ENCODE measurements at regions of chr9 and their contacts with region 1.

Region 1: GRCh38 chr9:89428901-89429890 is 68.7 kb downstream of the SEMA4D start:
- DNase-seq: peak; percentile 53 to 74
- H3K4me3 ChIP-seq: no peak overlapping the region
- H3K27ac ChIP-seq: peak overlapping the region; percentile 14; the same call in 1 of the 2 replicates
- H3K4me1 ChIP-seq: peaks cover 9 to 30% (median 19%) of the 10 kb centered on the region in 4 experiments
- H3K27me3 ChIP-seq: no peaks in the 10 kb centered on the region
- CTCF ChIP-seq: peak in 2 of 3 experiments; percentile 91; a peak in 3 of 4 replicates
- EP300 ChIP-seq: no peak
- POLR2A ChIP-seq: no peak
- RAD21 ChIP-seq: peak; percentile 80 to 90

Region 2: DNA sequence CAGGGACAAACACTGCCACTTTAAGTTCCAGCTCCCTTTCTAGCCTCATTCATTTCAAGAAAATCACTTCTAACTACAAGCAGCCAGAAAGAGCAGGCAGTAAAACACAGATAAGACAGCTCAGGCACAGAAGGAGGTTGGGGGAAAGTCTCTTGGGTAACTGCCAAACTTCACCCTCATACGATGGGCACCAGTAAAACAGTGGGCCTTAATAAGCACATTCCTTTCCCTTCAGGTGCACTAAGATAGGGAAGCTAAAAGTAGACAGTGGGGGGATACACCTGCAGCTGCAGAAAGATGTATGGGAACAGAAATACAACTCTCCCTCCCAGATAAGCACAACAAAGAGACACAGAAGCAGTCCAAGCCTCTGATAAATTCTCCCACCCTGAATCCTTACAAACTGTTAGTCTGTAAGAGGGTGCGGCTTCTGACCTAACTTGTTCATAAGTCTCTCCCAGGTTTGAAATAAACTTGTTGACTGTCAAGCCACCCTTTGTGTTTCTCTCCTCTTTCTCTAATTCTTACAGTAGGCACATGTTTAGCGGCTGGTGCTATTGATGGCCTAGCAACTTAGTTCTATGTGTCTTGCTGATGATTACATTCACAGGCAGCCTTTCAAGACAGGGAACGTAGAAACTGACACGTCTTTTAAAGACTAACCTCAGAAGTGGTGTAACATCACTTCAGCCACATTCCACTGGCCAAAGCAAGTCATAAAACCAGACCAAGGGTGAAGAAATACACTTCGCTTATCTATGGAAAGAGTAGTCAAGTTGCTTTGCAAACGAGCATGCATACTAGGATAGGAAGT is 125.0 kb before region 1 on chr9:
- CTCF ChIA-PET with region 1: no interaction called
- POLR2A ChIA-PET with region 1: no interaction called
- DNase-seq: no peak
- H3K4me3 ChIP-seq: no peak overlapping the region
- H3K27ac ChIP-seq: no peak overlapping the region
- H3K4me1 ChIP-seq: no peaks in the 10 kb centered on the region; a peak in 1 of 7 replicates
- H3K27me3 ChIP-seq: no peaks in the 10 kb centered on the region
- CTCF ChIP-seq: no peak
- EP300 ChIP-seq: no peak
- POLR2A ChIP-seq: no peak
- RAD21 ChIP-seq: no peak

Region 3: DNA sequence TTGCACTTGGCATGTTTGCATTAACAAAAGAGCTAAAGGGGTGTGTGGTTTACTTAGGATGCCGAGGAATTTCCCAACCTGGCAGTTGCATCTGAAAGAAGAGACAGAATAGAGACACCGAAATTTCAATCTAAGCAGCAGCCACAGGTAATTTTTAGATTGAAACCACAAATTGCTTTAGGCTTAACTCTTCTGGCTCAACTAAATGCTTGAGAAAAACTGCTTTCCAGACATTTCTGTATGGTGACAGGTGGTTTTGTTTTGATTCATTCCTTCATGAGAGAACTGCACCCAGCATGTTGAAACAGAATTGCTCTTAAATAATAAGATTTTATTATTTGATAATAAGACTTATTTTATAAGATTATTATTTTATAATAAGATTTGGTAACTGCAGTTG is 89.4 kb before region 1 on chr9:
- CTCF ChIA-PET with region 1: no interaction called
- POLR2A ChIA-PET with region 1: no interaction called
- DNase-seq: no peak
- H3K4me3 ChIP-seq: no peak overlapping the region
- H3K27ac ChIP-seq: no peak overlapping the region
- H3K4me1 ChIP-seq: no peaks in the 10 kb centered on the region
- H3K27me3 ChIP-seq: no peaks in the 10 kb centered on the region
- CTCF ChIP-seq: no peak
- EP300 ChIP-seq: no peak
- POLR2A ChIP-seq: no peak
- RAD21 ChIP-seq: no peak

Region 4: GRCh38 chr9:89364666-89365531 is 64.3 kb before region 1 on chr9:
- CTCF ChIA-PET with region 1: no interaction called
- POLR2A ChIA-PET with region 1: no interaction called
- DNase-seq: no peak
- H3K4me3 ChIP-seq: no peak overlapping the region
- H3K27ac ChIP-seq: no peak overlapping the region
- H3K4me1 ChIP-seq: no peaks in the 10 kb centered on the region
- H3K27me3 ChIP-seq: no peaks in the 10 kb centered on the region
- CTCF ChIP-seq: no peak
- EP300 ChIP-seq: no peak
- POLR2A ChIP-seq: no peak
- RAD21 ChIP-seq: no peak

Region 5: GRCh38 chr9:89442981-89443814 is 14.0 kb after region 1 on chr9:
- CTCF ChIA-PET with region 1: interaction called, 45 read pairs
- POLR2A ChIA-PET with region 1: interaction called, 5 read pairs
- DNase-seq: no peak
- H3K4me3 ChIP-seq: no peak overlapping the region
- H3K27ac ChIP-seq: no peak overlapping the region
- H3K4me1 ChIP-seq: peaks cover 0 to 36% (median 7%) of the 10 kb centered on the region in 4 experiments; a peak in 6 of 7 replicates
- H3K27me3 ChIP-seq: no peaks in the 10 kb centered on the region
- CTCF ChIP-seq: no peak
- EP300 ChIP-seq: no peak
- POLR2A ChIP-seq: no peak
- RAD21 ChIP-seq: no peak

Region 6: DNA sequence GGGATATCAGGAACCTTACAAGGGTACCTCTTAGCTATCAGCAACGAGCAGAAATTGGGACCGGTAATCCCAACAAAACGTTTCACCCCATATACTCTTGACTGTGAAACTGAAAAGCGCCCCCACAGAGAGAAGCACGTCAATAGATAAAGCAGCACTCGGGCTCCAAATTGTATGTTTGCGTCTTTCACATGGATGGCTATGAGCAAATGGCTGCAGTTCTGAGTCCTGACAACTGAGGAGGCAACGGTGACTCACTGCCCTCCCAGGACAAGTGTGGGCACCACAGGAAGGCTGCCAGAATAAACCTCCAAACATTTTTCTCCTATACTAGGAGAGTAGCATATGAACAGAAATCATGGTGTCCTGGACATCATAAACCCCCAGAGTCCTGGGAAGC is 32.1 kb after region 1 on chr9:
- CTCF ChIA-PET with region 1: interaction called, 28 read pairs
- POLR2A ChIA-PET with region 1: interaction called, 10 read pairs
- DNase-seq: no peak
- H3K4me3 ChIP-seq: no peak overlapping the region
- H3K27ac ChIP-seq: no peak overlapping the region
- H3K4me1 ChIP-seq: peaks cover 18 to 40% (median 23%) of the 10 kb centered on the region in 4 experiments
- H3K27me3 ChIP-seq: no peaks in the 10 kb centered on the region
- CTCF ChIP-seq: no peak
- EP300 ChIP-seq: no peak
- POLR2A ChIP-seq: no peak
- RAD21 ChIP-seq: no peak

Region 7: DNA sequence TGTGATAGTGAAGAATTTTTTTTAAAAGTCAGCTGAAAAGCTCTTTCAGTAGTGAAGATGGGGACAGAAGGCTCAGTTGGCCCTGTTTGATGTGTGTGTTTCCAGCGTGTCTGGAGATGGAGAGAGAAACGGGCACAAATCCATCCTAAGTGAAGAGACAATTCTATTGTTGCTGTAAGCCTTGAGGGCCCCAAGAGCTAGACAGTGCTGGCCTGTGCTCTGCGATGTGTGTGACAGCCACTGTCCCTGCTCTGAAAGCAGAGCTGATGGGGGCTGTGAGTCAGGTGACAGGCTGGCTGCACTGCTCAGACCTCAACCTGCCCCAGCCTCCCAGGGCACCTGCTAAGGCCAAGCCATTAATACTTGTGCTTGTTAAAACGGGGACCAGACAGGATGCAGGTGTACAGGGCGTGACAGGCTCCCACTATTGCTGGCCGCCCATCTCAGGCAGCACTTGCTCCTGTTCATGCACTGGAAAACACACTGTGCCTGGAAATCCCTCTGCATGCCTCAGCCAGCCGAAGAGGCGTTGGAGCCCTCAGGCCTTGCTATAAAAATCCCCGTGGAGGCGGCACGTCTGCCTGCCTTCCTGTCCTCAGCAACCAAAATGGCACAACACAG is 113.3 kb after region 1 on chr9:
- CTCF ChIA-PET with region 1: interaction called, 147 read pairs
- POLR2A ChIA-PET with region 1: interaction called, 14 read pairs
- DNase-seq: no peak
- H3K4me3 ChIP-seq: no peak overlapping the region
- H3K27ac ChIP-seq: no peak overlapping the region
- H3K4me1 ChIP-seq: peaks cover 0 to 9% (median 5%) of the 10 kb centered on the region in 4 experiments; a peak in 6 of 7 replicates
- H3K27me3 ChIP-seq: no peaks in the 10 kb centered on the region; a peak in 1 of 7 replicates
- CTCF ChIP-seq: no peak
- EP300 ChIP-seq: no peak
- POLR2A ChIP-seq: no peak
- RAD21 ChIP-seq: no peak

Region 8: GRCh38 chr9:89564352-89564878 is 135.2 kb after region 1 on chr9:
- CTCF ChIA-PET with region 1: interaction called, 40 read pairs
- POLR2A ChIA-PET with region 1: interaction called, 3 read pairs
- DNase-seq: peak; percentile 46 to 68
- H3K4me3 ChIP-seq: no peak overlapping the region
- H3K27ac ChIP-seq: no peak overlapping the region
- H3K4me1 ChIP-seq: peaks cover 0 to 3% (median 1%) of the 10 kb centered on the region in 4 experiments; a peak in 3 of 7 replicates
- H3K27me3 ChIP-seq: no peaks in the 10 kb centered on the region
- CTCF ChIP-seq: peak; percentile 54 to 82 (median 71)
- EP300 ChIP-seq: no peak
- POLR2A ChIP-seq: no peak
- RAD21 ChIP-seq: peak; percentile 38 to 53